Activated CD4-positive, alpha-beta T cell treated with anti-CD3 and anti-CD28 coated beads, Interleukin-2, amount 10 ng/mL, durations not matched to agents 24 days and 14 days (primary cell): ENCODE measurements at regions of chr2 and their contacts with region 1.

Region 1: DNA sequence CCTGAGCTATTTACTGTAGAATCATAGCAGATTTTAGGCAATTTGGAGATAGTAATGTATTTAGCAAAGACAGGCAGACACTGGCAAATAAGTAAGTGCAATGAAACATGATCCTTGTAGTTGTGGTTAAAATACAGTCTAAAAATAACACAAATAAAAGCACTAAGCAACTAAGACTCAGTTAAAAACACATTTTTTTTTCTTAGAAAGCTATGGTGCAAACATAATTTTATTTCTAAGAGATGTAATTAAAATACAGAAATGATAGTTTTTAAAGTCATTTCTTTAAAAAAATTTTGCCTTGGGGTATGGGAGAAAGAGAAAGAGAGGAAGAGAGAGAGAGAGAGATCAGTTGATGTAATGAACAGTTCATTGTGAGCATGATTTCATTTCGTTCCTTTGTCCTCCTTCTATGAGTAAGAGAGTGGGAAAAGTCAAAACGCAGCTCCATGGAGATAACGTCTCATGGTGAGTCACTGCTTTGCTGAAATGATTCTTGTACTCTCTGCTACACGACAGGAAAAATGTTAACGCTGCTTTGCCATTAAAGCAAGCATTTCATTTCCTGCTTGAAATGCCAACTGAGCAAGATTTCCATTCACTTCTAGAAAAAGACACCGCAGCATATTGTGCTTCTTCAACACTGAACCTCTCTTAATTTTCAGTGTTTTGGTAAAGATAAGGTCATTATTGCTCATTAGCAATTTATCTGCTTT is 61.3 kb upstream of the PGAP1 start:
- DNase-seq: peak; percentile 82
- H3K4me3 Mint-ChIP-seq: peak overlapping the region; percentile 55
- H3K27ac Mint-ChIP-seq: peak overlapping the region; percentile 93
- H3K4me1 Mint-ChIP-seq: peaks cover 37% of the 10 kb centered on the region
- H3K27me3 Mint-ChIP-seq: no peaks in the 10 kb centered on the region

Region 2: DNA sequence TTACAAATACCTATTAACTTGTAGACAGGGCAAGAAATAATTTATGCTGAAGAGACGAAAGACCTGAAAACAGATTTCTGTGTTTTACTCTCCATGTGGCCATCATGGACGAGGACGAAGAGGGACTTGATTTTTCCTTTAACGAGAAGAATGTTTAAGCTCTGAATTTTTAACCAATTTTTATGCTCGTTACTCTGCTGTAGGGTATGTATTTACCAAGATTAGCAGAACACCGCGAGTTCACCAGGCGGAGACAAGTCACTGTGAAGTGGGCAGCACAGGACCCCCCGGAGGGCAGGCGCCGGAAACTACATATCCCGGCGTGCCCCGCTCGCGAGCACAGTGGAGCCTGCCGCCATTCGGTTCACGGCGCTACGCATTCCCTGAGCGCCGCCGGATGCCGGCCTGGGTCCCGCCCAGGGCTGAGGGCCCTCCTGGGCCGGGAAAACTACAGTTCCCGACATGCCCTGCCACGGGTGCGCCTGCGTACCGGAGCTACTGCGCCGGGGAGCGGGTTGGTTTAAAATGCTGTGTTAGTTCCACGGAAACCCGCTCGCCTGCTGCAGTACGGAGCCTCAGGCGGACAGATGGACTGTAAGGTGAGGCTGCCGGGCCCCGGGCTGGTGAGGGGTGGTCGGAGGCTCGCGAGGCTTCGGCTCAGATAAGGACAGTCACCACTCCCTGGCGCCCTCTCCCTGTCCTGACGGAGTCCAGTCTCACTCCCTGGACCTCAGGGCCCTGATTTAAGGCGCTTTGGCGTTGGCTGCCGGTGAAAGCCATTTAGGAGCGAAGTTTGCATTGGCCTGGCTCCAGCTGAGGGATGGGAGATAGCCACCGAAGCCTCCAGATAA is 348.4 kb before region 1 on chr2 and contains the start of gene CCDC150:
- intact Hi-C with region 1: loop called (anchors 5 kb)
- DNase-seq: peak; percentile 99
- H3K4me3 Mint-ChIP-seq: peak within 1 kb of the TSS; percentile 96
- H3K27ac Mint-ChIP-seq: peak within 1 kb of the TSS; percentile 85
- H3K4me1 Mint-ChIP-seq: peaks cover 21% of the 10 kb centered on the region
- H3K27me3 Mint-ChIP-seq: peaks cover 12% of the 10 kb centered on the region
- total RNA-seq, gene CCDC150: 18.2 and 21.1 TPM in 2 replicates

Region 3: DNA sequence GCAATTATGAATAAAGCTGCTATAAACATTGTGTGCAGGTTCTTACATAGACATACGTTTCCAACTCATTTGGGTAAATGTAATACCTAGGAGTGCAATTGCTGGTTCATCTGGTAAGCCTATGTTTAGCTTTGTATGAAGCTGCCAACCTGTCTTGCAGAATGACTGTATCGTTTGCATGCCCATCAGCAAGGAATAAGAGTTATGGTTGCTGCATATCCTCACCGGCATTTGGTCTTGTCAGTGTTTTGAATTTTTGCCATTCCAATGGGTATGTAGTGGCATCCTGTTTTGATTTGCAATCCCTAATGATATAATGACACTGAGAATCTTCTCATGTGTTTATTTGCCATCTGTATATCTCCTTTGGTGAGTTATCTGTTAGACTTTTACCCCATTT is 327.6 kb before region 1 on chr2:
- intact Hi-C with region 1: no loop called
- DNase-seq: no peak
- H3K4me3 Mint-ChIP-seq: no peak overlapping the region
- H3K27ac Mint-ChIP-seq: no peak overlapping the region
- H3K4me1 Mint-ChIP-seq: no peaks in the 10 kb centered on the region
- H3K27me3 Mint-ChIP-seq: no peaks in the 10 kb centered on the region

Region 4: GRCh38 chr2:196798980-196799379 is 188.8 kb before region 1 on chr2:
- intact Hi-C with region 1: loop called (anchors 1 kb)
- DNase-seq: peak; percentile 61
- H3K4me3 Mint-ChIP-seq: peak overlapping the region; percentile 90
- H3K27ac Mint-ChIP-seq: peak overlapping the region; percentile 96
- H3K4me1 Mint-ChIP-seq: peaks cover 27% of the 10 kb centered on the region
- H3K27me3 Mint-ChIP-seq: no peaks in the 10 kb centered on the region

Region 5: DNA sequence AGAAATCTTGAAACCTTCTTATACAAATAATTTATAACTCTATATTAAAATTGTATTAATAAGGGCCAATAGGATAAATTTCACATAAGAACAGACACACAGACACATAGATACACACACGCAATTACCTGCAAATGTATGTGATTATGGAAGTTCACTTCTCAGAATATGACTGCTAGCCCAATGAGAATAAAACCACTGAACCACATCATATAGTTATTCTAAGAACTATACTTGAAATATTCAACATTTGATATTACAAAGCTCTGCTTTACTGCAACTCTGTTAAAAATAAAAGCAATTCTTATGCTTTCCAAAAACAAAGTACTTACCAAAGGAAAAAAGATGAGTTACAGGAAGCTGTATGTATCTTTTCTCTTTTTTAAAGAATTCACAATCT is 112.4 kb before region 1 on chr2:
- intact Hi-C with region 1: loop called (anchors 5 kb)
- DNase-seq: no peak
- H3K4me3 Mint-ChIP-seq: no peak overlapping the region
- H3K27ac Mint-ChIP-seq: no peak overlapping the region
- H3K4me1 Mint-ChIP-seq: peaks cover 24% of the 10 kb centered on the region
- H3K27me3 Mint-ChIP-seq: no peaks in the 10 kb centered on the region

Region 6: GRCh38 chr2:196961889-196962288 is 25.9 kb before region 1 on chr2:
- intact Hi-C with region 1: loop called (anchors 1 kb)
- DNase-seq: peak; percentile 70
- H3K4me3 Mint-ChIP-seq: peak overlapping the region; percentile 65
- H3K27ac Mint-ChIP-seq: peak overlapping the region; percentile 83
- H3K4me1 Mint-ChIP-seq: peaks cover 24% of the 10 kb centered on the region
- H3K27me3 Mint-ChIP-seq: no peaks in the 10 kb centered on the region

Region 7: DNA sequence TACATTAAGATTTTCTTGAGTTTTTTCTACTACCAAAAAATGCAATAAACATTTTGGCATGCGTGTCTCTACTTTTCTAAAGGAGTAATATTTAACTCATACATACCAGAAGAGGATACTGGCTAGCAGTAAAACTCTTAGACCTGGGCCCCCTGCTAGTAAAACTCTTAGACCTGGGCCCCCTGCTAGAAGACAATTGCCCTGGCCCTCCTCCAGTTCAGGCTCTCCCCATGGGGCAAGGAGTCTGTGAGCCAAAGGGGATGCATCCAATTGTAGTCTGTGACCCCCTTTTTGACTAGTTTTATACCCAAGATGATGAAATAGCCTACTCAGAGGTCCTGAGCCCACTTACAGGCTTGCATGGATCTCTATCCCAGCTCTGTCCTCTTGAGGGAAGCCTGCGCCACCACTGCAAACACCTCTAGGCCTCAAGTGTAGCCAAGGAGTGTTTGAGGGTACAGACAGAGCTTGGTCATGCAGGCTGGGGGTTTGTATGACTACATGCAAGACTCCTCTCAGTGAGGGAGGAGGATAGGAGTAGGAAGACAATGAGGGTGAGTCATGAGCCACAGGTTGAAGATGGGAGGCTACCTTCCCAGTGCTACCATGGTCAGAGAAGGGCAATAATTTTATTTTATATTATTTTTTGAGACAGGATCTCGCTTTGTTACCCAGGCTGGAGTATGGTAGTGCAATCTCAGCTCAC is 16.1 kb before region 1 on chr2:
- intact Hi-C with region 1: loop called (anchors 2 kb)
- DNase-seq: no peak
- H3K4me3 Mint-ChIP-seq: no peak overlapping the region
- H3K27ac Mint-ChIP-seq: no peak overlapping the region
- H3K4me1 Mint-ChIP-seq: peaks cover 24% of the 10 kb centered on the region
- H3K27me3 Mint-ChIP-seq: no peaks in the 10 kb centered on the region

Region 8: DNA sequence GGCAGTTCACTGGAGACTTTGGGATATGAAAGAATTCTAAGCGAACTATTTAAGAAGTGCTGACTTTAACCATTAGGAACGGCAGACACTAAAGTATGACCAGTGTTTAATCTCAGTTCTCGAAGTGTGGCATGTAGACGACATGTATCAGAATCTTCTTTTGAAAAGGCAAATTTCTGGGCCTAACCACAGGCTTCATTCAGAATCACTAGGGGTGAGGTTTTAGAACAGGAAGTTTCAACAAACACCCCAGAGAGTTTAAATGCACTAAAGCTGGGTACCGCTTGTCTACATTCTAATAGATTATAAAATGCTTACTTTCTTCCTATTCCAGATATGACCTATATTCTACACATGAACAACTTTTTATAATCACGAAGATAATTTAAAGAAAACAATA is 142.5 kb after region 1 on chr2:
- intact Hi-C with region 1: loop called (anchors 1 kb)
- DNase-seq: peak; percentile 77
- H3K4me3 Mint-ChIP-seq: peak overlapping the region; percentile 19
- H3K27ac Mint-ChIP-seq: peak overlapping the region; percentile 83
- H3K4me1 Mint-ChIP-seq: peaks cover 63% of the 10 kb centered on the region
- H3K27me3 Mint-ChIP-seq: no peaks in the 10 kb centered on the region